ENCODE measurements at regions of chr13 and their contacts with region 1.

Region 1: GRCh38 chr13:112711528-112712265 is 21.9 kb downstream of the ATP11A start:
- DNase-seq: peak; percentile 94
- H3K4me3 Mint-ChIP-seq: peak overlapping the region; percentile 70
- H3K27ac Mint-ChIP-seq: peak overlapping the region; percentile 93
- H3K4me1 Mint-ChIP-seq: peaks cover 15% of the 10 kb centered on the region
- H3K27me3 Mint-ChIP-seq: no peaks in the 10 kb centered on the region
- CTCF ChIP-seq: peak; percentile 44

Region 2: DNA sequence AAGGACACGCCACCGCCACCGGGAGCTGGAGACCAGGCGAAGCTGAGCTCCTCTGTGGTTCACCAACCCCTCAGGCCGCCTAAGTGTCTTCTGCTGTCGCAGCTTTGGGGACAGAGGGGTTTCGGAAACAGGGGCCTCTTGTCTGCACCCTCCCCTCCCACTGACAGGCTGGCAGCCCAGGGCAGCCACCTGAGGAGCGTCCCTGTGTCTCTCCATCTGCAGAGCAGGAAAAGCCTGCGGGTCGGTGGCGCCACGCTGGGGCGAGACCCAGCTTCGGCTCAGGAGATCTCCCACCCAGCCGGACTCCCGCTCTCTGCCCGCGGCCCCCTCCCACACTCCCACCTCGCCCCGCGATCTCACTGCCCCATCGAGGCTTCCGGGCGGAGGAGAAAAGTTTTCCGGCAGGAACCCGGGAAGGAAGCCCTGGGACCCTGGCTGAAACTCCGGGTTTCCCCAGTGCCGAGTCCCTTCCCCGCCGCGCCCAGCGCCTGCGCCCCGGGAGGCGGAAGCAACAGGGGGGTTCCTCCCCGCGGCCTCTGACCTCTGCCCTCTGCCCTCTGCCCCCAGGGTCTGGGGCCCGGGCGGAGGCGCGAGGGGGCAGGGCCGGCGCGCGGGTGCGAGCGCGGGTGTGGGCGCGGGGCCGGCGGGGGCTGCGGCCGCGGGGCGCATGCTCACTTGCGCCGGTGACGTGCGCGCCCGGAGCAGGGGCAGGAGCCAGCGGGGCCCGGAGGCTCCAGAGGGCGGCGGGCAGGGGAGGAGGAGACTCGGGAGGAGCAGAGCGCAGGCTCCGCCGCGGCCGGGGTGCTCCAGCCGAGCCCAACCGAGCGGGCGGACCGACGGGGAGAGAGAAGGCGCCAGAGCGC is 22.2 kb before region 1 on chr13 and contains the start of gene ATP11A:
- CTCF ChIA-PET with region 1: interaction called, 8 read pairs
- POLR2A ChIA-PET with region 1: interaction called, 10 read pairs
- intact Hi-C with region 1: no loop called
- DNase-seq: peak; percentile 85
- H3K4me3 Mint-ChIP-seq: peak within 1 kb of the TSS; percentile 85
- H3K27ac Mint-ChIP-seq: peak within 1 kb of the TSS; percentile 84
- H3K4me1 Mint-ChIP-seq: peaks cover 27% of the 10 kb centered on the region
- H3K27me3 Mint-ChIP-seq: no peaks in the 10 kb centered on the region
- CTCF ChIP-seq: no peak
- total RNA-seq, gene ATP11A: 41.2 and 42.7 TPM in 2 replicates

Region 3: DNA sequence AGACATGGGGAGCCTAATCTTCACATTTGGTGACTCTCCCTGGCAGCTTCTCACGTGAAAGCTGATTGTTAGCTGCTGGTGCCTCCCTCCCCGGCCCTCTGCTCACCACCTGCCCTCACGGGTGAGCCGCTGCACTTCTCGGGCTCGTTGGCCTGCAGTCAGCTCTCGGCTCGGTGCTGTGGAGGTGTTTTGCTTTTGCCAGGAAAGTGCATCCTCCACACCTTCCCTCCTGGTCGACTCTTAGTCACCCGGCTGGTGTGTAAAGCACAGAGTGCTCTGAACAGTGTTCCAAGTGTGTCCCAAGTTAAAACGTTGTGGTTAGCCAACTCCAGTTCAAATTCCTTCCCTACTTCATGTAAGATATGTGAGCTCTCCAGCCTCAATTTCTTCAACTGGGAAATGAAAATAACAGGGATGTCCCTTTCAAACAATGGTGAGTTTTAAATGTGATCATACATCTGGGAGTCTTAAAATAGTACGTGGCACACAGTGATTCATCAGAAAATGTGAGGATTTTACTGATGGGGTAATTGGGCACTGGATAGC is 32.9 kb after region 1 on chr13:
- CTCF ChIA-PET with region 1: interaction called, 5 read pairs
- POLR2A ChIA-PET with region 1: interaction called, 13 read pairs
- intact Hi-C with region 1: no loop called
- DNase-seq: peak; percentile 45
- H3K4me3 Mint-ChIP-seq: peak overlapping the region; percentile 10
- H3K27ac Mint-ChIP-seq: peak overlapping the region; percentile 59
- H3K4me1 Mint-ChIP-seq: peaks cover 16% of the 10 kb centered on the region
- H3K27me3 Mint-ChIP-seq: no peaks in the 10 kb centered on the region
- CTCF ChIP-seq: no peak

Region 4: GRCh38 chr13:114015608-114016295 is 1304.1 kb after region 1 on chr13:
- CTCF ChIA-PET with region 1: no interaction called
- POLR2A ChIA-PET with region 1: no interaction called
- intact Hi-C with region 1: no loop called
- DNase-seq: peak; percentile 97
- H3K4me3 Mint-ChIP-seq: peak overlapping the region; percentile 66
- H3K27ac Mint-ChIP-seq: peak overlapping the region; percentile 94
- H3K4me1 Mint-ChIP-seq: peaks cover 13% of the 10 kb centered on the region
- H3K27me3 Mint-ChIP-seq: no peaks in the 10 kb centered on the region
- CTCF ChIP-seq: no peak